GM12878 (cell line): ENCODE measurements at regions of chr3 and their contacts with region 1.

Region 1: GRCh38 chr3:167380004-167380689 is at the start of gene ZBBX:
- DNase-seq: peak; percentile 51
- ATAC-seq: peak; percentile 99
- H3K4me3 ChIP-seq: peak within 1 kb of the TSS; percentile 48; the same call in 1 of the 2 replicates
- H3K27ac ChIP-seq: no peak within 1 kb of the TSS
- H3K4me1 ChIP-seq: no peaks in the 10 kb centered on the region
- H3K27me3 ChIP-seq: no peaks in the 10 kb centered on the region
- CTCF ChIP-seq: peak; percentile 93 to 96 (median 95)
- EP300 ChIP-seq: no peak
- POLR2A ChIP-seq: no peak
- RAD21 ChIP-seq: peak; percentile 80
- polyA plus RNA-seq, gene ZBBX: 0.27 TPM in 1 of 2 experiments, not detected in the other

Region 2: GRCh38 chr3:167394003-167394402 is 13.9 kb after region 1 on chr3:
- CTCF ChIA-PET with region 1: interaction called, 40 read pairs
- POLR2A ChIA-PET with region 1: no interaction called
- RAD21 ChIA-PET with region 1: no interaction called
- SMC1A ChIA-PET with region 1: interaction called, 9 read pairs
- in situ Hi-C with region 1: no loop called
- intact Hi-C with region 1: no loop called
- DNase-seq: no peak
- ATAC-seq: no peak
- H3K4me3 ChIP-seq: no peak overlapping the region
- H3K27ac ChIP-seq: no peak overlapping the region
- H3K4me1 ChIP-seq: no peaks in the 10 kb centered on the region
- H3K27me3 ChIP-seq: no peaks in the 10 kb centered on the region
- CTCF ChIP-seq: no peak; a peak in 1 of 6 replicates
- EP300 ChIP-seq: no peak
- POLR2A ChIP-seq: no peak
- RAD21 ChIP-seq: peak; percentile 15; the same call in 1 of the 2 replicates

Region 3: DNA sequence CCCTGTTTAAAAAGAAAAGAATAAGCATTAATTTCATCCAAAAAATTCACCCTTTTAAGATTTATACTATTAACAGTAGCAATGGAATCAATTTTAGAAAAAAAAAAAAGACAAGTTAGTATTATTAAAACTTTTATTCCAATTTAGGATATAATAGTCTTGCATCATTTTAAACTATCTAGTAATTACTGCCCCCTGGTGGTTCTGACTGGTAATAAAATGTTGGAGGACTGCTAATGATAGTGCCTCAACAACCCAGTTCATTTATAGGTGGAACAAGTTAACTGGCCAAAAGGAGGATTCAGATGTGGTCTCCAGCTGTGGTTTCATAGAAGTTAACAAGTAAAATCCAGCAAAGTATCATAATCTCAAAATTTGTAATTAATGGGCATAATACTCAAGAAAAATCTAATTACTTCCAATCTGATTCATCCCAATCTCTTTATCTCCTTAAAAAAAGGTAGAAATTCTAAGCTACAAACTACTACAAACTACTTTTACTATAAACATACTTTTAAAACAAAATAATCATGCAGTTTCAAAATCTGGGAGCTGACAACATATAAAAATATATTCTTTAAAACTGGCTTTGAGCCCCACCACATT is 304.3 kb after region 1 on chr3:
- CTCF ChIA-PET with region 1: interaction called, 39 read pairs
- POLR2A ChIA-PET with region 1: no interaction called
- RAD21 ChIA-PET with region 1: interaction called, 4 read pairs
- SMC1A ChIA-PET with region 1: interaction called, 9 read pairs
- in situ Hi-C with region 1: no loop called
- intact Hi-C with region 1: loop called (anchors 1 kb)
- DNase-seq: no peak
- ATAC-seq: peak; percentile 92
- H3K4me3 ChIP-seq: no peak overlapping the region
- H3K27ac ChIP-seq: no peak overlapping the region
- H3K4me1 ChIP-seq: no peaks in the 10 kb centered on the region
- H3K27me3 ChIP-seq: no peaks in the 10 kb centered on the region
- CTCF ChIP-seq: peak; percentile 48 to 58 (median 58); a peak in 5 of 6 replicates
- EP300 ChIP-seq: no peak
- POLR2A ChIP-seq: no peak
- RAD21 ChIP-seq: peak; percentile 51

Region 4: DNA sequence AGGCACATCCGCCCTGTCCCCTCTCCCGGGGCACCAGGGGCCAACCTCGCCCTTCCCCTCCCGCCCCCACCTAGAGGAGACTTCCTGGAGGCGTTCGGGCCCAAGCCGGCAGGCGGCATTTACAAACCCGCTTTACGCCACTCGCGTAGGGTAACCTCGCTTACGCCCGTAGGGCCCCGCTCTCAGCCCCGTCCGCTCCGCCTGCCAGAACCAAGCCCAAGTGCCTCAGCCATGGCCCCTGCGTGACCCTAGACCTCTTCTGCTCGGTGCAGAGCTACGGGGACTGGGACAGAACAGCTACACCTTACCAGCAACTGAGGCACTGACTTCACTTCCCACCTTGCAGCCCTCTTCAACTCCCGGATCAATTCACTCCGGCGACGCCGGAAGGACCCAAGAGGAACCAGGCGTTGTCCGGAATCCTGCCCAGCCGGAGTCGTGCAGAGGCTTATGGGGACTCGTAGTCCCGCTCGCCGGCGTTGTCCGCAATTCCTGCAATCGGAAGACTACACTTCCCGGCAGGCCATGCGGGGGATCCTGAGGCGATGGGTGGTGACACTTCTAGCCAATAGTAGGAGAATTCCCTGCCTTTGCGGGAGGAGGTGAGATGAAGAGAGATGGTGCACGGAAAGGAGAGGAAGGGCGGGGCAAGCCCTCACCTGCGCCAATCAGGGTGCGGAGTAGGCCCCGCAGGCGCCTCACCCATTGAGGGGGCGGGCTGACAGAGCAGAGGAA is 354.5 kb after region 1 on chr3 and contains the start of gene PDCD10:
- CTCF ChIA-PET with region 1: interaction called, 28 read pairs
- POLR2A ChIA-PET with region 1: no interaction called
- RAD21 ChIA-PET with region 1: no interaction called
- SMC1A ChIA-PET with region 1: interaction called, 23 read pairs
- in situ Hi-C with region 1: no loop called
- intact Hi-C with region 1: no loop called
- DNase-seq: peak; percentile 98
- ATAC-seq: peak; percentile 91
- H3K4me3 ChIP-seq: peak within 1 kb of the TSS; percentile 97
- H3K27ac ChIP-seq: peak within 1 kb of the TSS; percentile 86
- H3K4me1 ChIP-seq: peaks cover 3% of the 10 kb centered on the region; the same call in 1 of the 2 replicates
- H3K27me3 ChIP-seq: no peaks in the 10 kb centered on the region
- CTCF ChIP-seq: 0 out of 6 replicates have a peak, but pooled peaks of 1 of the 3 experiments have one; percentile 7
- EP300 ChIP-seq: no peak
- POLR2A ChIP-seq: peak; percentile 85
- RAD21 ChIP-seq: no peak
- polyA plus RNA-seq, gene PDCD10: 199 to 247 TPM

Region 5: DNA sequence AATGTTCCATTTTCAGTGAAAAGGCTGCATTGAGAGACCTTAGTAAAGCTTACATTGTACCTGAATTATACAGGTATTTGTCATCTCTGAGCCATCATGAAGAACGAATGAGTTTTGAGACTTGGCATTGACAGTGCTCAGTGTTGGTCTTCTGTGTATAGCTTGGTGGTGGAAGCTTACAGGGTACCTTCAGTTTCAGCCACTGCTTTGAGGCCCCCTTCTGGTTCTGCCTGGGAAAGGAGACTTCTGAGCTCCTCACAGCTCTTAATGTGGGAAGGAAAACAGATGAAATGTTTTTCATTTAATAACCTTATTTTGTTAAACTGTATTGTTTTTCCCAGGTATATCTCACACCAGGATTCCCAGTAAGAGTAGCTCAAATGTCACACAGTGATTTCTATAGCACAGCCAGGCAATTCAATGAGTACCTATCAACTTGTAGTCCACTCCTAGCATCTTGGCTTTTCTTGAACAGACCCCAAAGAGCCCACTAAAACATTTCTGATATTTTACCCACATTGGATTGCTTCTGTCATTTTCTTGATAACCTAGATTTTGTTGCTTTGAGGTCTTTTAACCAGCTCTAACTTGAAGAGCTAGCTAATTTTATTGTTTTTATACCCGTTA is 360.9 kb after region 1 on chr3:
- CTCF ChIA-PET with region 1: interaction called, 28 read pairs
- POLR2A ChIA-PET with region 1: no interaction called
- RAD21 ChIA-PET with region 1: interaction called, 25 read pairs
- SMC1A ChIA-PET with region 1: interaction called, 23 read pairs
- in situ Hi-C with region 1: no loop called
- intact Hi-C with region 1: no loop called
- DNase-seq: no peak
- ATAC-seq: peak; percentile 97
- H3K4me3 ChIP-seq: no peak overlapping the region
- H3K27ac ChIP-seq: no peak overlapping the region
- H3K4me1 ChIP-seq: no peaks in the 10 kb centered on the region
- H3K27me3 ChIP-seq: no peaks in the 10 kb centered on the region
- CTCF ChIP-seq: peak; percentile 60 to 71 (median 69)
- EP300 ChIP-seq: no peak
- POLR2A ChIP-seq: no peak
- RAD21 ChIP-seq: peak; percentile 65

Region 6: DNA sequence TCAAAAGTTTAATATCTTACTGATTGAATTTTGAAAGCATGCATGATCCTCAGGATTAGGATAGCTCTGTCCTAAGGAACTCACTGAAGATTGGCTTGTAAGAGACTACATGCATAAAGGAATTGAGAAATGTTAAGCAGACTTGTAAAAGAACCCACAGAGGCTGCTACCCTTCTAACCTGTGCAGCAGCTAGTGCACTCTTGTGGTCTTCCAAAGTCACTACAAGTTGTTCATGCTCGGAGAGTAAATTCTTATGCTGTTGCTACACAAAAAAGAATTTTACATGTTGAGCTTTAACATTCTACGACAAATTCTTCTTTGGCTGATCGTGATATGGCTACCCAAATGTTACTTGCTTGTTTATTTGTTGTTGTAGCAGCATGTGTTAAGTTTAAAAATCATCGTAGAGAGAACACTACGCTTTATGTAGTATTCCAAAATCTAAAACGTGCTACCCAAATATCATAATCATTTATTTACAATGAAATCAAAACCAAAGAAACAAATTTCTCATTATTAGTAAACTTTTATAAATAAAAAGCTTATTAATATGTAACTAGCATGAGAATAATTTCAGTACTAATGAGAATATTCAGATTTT is 660.6 kb after region 1 on chr3:
- CTCF ChIA-PET with region 1: no interaction called
- POLR2A ChIA-PET with region 1: no interaction called
- RAD21 ChIA-PET with region 1: no interaction called
- SMC1A ChIA-PET with region 1: no interaction called
- in situ Hi-C with region 1: no loop called
- intact Hi-C with region 1: loop called (anchors 2 kb)
- DNase-seq: no peak
- ATAC-seq: peak; percentile 68
- H3K4me3 ChIP-seq: no peak overlapping the region
- H3K27ac ChIP-seq: no peak overlapping the region
- H3K4me1 ChIP-seq: no peaks in the 10 kb centered on the region
- H3K27me3 ChIP-seq: no peaks in the 10 kb centered on the region
- CTCF ChIP-seq: peak; percentile 31 to 58 (median 51); a peak in 4 of 6 replicates
- EP300 ChIP-seq: no peak
- POLR2A ChIP-seq: no peak
- RAD21 ChIP-seq: peak; percentile 58